ENCODE measurements at regions of chr1 and their contacts with region 1.

Region 1: GRCh38 chr1:65036545-65037180 is 70.3 kb upstream of the JAK1 start:
- DNase-seq: no peak
- H3K4me3 Mint-ChIP-seq: no peak overlapping the region
- H3K27ac Mint-ChIP-seq: no peak overlapping the region
- H3K4me1 Mint-ChIP-seq: peaks cover 11% of the 10 kb centered on the region
- H3K27me3 Mint-ChIP-seq: no peaks in the 10 kb centered on the region

Region 2: DNA sequence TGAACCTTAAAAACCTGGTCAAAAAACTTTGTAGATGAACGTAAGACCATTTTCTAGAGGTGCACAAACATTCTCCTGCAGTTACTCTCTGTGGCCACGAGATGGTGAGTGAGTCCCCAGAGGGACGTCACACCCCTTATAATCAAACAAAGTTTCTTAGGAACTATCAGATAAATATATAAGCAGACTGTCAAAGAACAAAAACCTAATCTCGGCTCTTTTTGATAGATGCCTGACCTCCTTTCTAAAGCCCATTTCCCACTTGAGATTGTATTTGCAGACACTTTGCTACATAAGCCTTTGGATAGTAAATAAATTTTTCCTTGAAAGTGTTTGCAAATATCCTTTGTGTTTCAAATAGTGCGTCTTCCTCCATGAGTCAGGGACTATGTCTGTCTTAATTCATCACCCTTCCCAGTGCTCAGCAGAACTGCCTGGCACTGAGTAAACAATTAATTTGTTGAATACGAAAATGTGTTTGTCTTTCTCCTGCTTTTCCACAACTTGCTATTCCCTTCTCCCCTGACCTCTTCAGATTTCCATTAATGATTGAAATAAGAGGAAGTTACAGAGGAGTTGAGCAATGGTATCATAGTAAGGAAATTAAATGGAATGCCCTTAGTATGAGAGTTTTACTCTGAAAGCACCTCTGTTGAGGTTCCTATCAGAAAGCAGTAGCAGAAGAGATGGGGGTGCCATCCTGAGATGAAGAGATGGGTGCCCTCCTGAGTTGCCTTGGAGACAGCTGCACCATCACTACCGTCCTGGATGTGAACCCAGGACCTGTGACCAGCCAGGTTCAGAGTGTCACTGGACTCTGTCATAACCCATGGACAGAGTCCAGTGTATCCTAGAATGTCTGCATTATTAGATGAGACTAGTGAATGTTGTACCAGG is 349.6 kb before region 1 on chr1:
- CTCF ChIA-PET with region 1: no interaction called
- intact Hi-C with region 1: loop called (anchors 2 kb)
- DNase-seq: peak; percentile 39
- H3K4me3 Mint-ChIP-seq: no peak overlapping the region
- H3K27ac Mint-ChIP-seq: no peak overlapping the region
- H3K4me1 Mint-ChIP-seq: peaks cover 5% of the 10 kb centered on the region
- H3K27me3 Mint-ChIP-seq: no peaks in the 10 kb centered on the region

Region 3: GRCh38 chr1:64864018-64864940 is 172.4 kb before region 1 on chr1:
- CTCF ChIA-PET with region 1: interaction called, 3 read pairs
- intact Hi-C with region 1: loop called (anchors 1 kb)
- DNase-seq: peak; percentile 60
- H3K4me3 Mint-ChIP-seq: no peak overlapping the region
- H3K27ac Mint-ChIP-seq: peak overlapping the region; percentile 63
- H3K4me1 Mint-ChIP-seq: peaks cover 19% of the 10 kb centered on the region
- H3K27me3 Mint-ChIP-seq: no peaks in the 10 kb centered on the region

Region 4: DNA sequence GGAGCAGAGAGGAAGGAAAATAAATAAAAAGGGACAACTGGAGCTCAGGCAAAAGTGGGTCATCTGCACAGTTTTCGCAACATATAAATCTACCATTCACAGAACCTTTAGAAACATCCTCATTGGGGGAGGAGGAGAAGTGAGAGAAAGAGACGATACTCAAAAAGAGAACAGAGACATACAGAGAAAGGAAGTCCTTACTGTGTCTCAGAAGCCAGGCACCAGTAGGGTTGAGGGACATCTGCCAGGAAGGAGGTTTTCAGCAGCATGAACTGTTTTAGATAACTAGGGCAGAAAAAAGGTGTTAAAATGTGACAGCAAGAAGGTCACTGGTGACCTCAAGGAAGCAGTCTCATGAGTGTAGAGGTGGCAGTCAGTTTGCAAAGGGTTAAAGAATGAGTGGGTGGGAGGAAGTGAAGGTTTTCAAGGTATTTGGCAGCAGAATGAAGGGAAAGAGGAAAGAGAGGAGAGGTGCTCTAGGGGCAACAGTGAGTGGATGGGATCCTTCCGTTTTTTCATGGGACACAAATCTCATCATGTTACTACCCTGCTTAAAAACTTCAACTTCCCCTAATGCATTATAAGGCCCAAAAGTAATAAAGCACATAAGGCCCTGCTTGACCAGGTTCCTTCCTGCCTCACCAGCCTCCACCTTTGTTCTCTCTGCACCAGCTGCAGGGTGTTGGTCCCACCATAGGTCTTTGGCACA is 79.8 kb before region 1 on chr1:
- CTCF ChIA-PET with region 1: no interaction called
- intact Hi-C with region 1: loop called (anchors 2 kb)
- DNase-seq: peak; percentile 79
- H3K4me3 Mint-ChIP-seq: no peak overlapping the region
- H3K27ac Mint-ChIP-seq: no peak overlapping the region
- H3K4me1 Mint-ChIP-seq: peaks cover 63% of the 10 kb centered on the region
- H3K27me3 Mint-ChIP-seq: no peaks in the 10 kb centered on the region

Region 5: DNA sequence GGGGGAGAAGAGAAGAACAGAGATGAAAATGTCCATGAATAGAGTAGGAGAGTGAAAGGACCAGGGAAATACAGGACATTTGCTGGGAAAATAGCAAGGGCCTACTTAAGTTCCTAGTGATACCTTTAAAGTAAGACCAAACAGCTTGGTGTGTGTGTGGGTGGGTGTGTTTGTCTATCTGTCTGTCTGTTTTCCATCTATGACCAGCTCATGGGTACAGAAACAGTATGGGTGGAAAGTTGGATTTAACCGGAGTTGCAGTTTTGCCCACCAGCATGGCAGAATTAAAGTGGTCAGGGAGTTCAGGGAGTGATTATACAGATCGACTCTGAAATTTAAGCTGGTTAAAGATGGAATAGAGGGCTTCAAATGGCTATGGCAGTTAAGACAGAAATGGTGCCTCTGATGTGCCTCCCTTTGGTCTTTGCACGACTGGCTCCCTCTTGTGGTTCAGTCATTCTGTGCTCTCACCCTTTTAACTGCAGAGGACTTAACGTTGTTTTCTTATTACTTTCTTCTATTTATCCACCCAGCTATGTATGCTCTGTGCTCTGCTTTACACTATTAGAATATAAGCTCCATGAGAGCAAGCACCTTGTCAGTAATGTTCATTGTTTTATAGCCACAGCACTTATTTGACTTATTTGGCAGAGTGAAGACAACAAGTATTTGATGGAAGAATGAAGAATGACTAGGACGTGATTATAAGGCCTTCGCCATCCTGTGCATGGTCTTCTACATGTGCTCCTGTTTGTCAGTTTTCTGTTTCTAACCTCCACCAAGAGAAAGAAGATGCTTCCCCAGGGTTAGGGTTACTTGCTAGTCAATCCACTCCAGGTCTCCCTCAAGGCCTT is 38.7 kb after region 1 on chr1:
- CTCF ChIA-PET with region 1: interaction called, 6 read pairs
- intact Hi-C with region 1: loop called (anchors 1 kb)
- DNase-seq: peak; percentile 84
- H3K4me3 Mint-ChIP-seq: no peak overlapping the region
- H3K27ac Mint-ChIP-seq: no peak overlapping the region
- H3K4me1 Mint-ChIP-seq: peaks cover 20% of the 10 kb centered on the region
- H3K27me3 Mint-ChIP-seq: no peaks in the 10 kb centered on the region

Region 6: DNA sequence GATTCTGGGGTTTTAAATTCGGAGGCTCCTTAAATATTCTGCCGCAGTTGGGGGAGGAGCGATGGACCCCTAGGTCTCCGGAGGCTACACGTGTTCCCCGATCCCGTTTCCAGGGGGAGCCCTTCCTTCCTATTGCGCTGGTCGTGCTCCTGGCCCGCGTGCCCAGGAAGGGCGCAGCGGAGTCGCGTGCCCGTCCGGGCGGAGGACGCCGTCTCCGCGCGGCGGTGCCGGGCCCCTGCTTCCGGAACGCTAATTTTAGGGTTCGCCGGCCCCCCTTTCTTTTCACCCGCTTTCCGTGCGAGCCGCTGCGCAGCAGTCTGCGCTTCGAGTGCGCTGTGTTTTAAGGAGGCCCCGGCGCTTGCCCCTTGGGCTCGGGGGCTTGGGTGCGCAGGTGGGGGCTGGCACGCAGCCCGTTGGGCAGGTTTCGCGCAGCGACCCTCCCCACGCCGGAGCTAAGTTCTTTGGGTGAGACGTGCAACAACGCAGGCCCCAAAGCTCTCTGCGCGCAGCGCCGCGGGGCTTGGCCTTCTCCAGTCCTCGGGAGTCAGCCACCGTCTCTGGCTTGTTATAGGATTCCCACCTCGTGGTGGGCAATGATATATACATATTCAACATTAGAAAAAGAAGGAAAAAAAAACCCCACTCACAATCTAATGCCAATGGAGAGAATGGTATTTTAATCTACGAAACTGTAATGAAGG is 229.1 kb after region 1 on chr1:
- CTCF ChIA-PET with region 1: no interaction called
- intact Hi-C with region 1: no loop called
- DNase-seq: peak; percentile 35
- H3K4me3 Mint-ChIP-seq: peak overlapping the region; percentile 35
- H3K27ac Mint-ChIP-seq: no peak overlapping the region
- H3K4me1 Mint-ChIP-seq: peaks cover 27% of the 10 kb centered on the region
- H3K27me3 Mint-ChIP-seq: peaks cover 16% of the 10 kb centered on the region